ENCODE measurements at regions of chr6 and their contacts with region 1.

Region 1: GRCh38 chr6:105992315-105992961 is 93.7 kb upstream of the PRDM1 start:
- DNase-seq: peak; percentile 86
- H3K4me3 ChIP-seq: peak overlapping the region; percentile 92
- H3K27ac ChIP-seq: no peak overlapping the region
- H3K4me1 ChIP-seq: peaks cover 23% of the 10 kb centered on the region
- H3K27me3 ChIP-seq: no peaks in the 10 kb centered on the region

Region 2: GRCh38 chr6:106300944-106301343 is 308.5 kb after region 1 on chr6:
- in situ Hi-C with region 1: loop called (anchors 10 kb)
- DNase-seq: peak; percentile 75
- H3K4me3 ChIP-seq: no peak overlapping the region
- H3K27ac ChIP-seq: no peak overlapping the region
- H3K4me1 ChIP-seq: peaks cover 13% of the 10 kb centered on the region
- H3K27me3 ChIP-seq: no peaks in the 10 kb centered on the region

Measured in GM23248 (cell line).